ENCODE measurements at regions of chr17 and their contacts with region 1.

Region 1: DNA sequence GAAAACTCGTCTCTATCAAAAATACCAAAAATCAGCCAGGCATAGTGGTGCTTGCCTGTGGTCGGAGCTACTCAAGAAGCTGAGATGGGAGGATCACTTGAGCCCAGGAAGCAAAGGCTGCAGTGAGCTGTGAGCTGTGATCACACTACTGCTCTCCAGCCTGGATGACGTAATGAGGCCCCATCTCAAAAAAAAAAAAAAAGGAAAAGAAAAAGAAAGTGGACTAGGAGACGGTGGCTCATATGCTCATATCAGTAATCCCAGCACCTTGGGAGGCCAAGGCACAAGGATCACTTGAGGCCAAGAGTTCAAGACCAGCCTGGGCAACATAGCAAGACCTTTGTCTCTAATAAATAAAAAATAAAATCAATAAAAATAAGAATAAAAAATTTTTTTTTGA is 8.8 kb upstream of the SUMO2 start:
- DNase-seq: no peak
- ATAC-seq: no peak
- H3K4me3 Mint-ChIP-seq: no peak overlapping the region
- H3K27ac Mint-ChIP-seq: no peak overlapping the region
- H3K4me1 Mint-ChIP-seq: peaks cover 8% of the 10 kb centered on the region
- H3K27me3 Mint-ChIP-seq: no peaks in the 10 kb centered on the region
- CTCF ChIP-seq: no peak

Region 2: GRCh38 chr17:75087558-75088453 is 103.8 kb before region 1 on chr17 and contains the start of gene SLC16A5:
- CTCF ChIA-PET with region 1: no interaction called
- POLR2A ChIA-PET with region 1: no interaction called
- intact Hi-C with region 1: no loop called
- DNase-seq: peak; percentile 48
- ATAC-seq: peak; percentile 50
- H3K4me3 Mint-ChIP-seq: peak within 1 kb of the TSS; percentile 66
- H3K27ac Mint-ChIP-seq: peak within 1 kb of the TSS; percentile 42
- H3K4me1 Mint-ChIP-seq: peaks cover 24% of the 10 kb centered on the region
- H3K27me3 Mint-ChIP-seq: no peaks in the 10 kb centered on the region
- CTCF ChIP-seq: no peak
- total RNA-seq, gene SLC16A5: 2.0 to 2.8 TPM

Region 3: DNA sequence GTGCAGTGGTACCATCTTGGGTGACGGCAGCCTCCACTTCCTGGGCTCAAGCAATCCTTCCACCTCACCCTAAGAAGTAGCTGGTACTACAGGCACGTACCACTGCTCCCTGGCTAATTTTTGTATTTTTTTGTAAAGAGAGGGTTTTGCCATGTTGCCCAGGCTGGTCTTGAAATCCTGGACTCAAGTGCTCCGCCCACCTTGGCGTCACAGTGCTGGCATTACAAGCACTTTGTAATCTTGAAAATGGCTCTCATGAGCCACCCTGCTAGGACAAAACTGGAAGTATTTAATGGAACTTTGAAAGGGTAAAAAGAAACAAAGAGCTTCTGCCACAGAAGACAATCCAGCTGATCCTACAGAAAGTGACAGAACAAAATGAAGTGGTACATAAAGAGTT is 18.1 kb before region 1 on chr17:
- CTCF ChIA-PET with region 1: interaction called, 15 read pairs
- POLR2A ChIA-PET with region 1: interaction called, 4 read pairs
- intact Hi-C with region 1: no loop called
- DNase-seq: no peak
- ATAC-seq: no peak
- H3K4me3 Mint-ChIP-seq: no peak overlapping the region
- H3K27ac Mint-ChIP-seq: peak overlapping the region; percentile 28
- H3K4me1 Mint-ChIP-seq: peaks cover 27% of the 10 kb centered on the region
- H3K27me3 Mint-ChIP-seq: no peaks in the 10 kb centered on the region
- CTCF ChIP-seq: no peak

Measured in activated CD8-positive, alpha-beta T cell treated with anti-CD3 and anti-CD28 coated beads for 36 hours (primary cell).